ENCODE measurements at regions of chr1 and their contacts with region 1.

Region 1: GRCh38 chr1:184664042-184664655 is 90.5 kb downstream of the EDEM3 start:
- DNase-seq: peak; percentile 43
- H3K4me3 ChIP-seq: peak overlapping the region; percentile 40 to 51 (median 48)
- H3K27ac ChIP-seq: no peak overlapping the region
- H3K4me1 ChIP-seq: peaks cover 10% of the 10 kb centered on the region
- H3K27me3 ChIP-seq: no peaks in the 10 kb centered on the region
- CTCF ChIP-seq: peak; percentile 77 to 97

Region 2: GRCh38 chr1:184082541-184083415 is 581.4 kb before region 1 on chr1:
- CTCF ChIA-PET with region 1: no interaction called
- dilution Hi-C with region 1: no loop called
- in situ Hi-C with region 1: loop called (anchors 10 to 25 kb)
- intact Hi-C with region 1: no loop called
- DNase-seq: no peak
- H3K4me3 ChIP-seq: no peak overlapping the region
- H3K27ac ChIP-seq: no peak overlapping the region
- H3K4me1 ChIP-seq: no peaks in the 10 kb centered on the region
- H3K27me3 ChIP-seq: no peaks in the 10 kb centered on the region
- CTCF ChIP-seq: no peak

Region 3: GRCh38 chr1:184242507-184242943 is 421.6 kb before region 1 on chr1:
- CTCF ChIA-PET with region 1: interaction called, 3 read pairs
- dilution Hi-C with region 1: no loop called
- in situ Hi-C with region 1: loop called in 1 of 2 experiments (anchors 25 kb)
- intact Hi-C with region 1: loop called (anchors 1 kb)
- DNase-seq: no peak
- H3K4me3 ChIP-seq: no peak overlapping the region
- H3K27ac ChIP-seq: no peak overlapping the region
- H3K4me1 ChIP-seq: no peaks in the 10 kb centered on the region
- H3K27me3 ChIP-seq: no peaks in the 10 kb centered on the region
- CTCF ChIP-seq: peak; percentile 9 to 31

Region 4: GRCh38 chr1:184494929-184495328 is 169.2 kb before region 1 on chr1:
- CTCF ChIA-PET with region 1: no interaction called
- dilution Hi-C with region 1: no loop called
- in situ Hi-C with region 1: no loop called
- intact Hi-C with region 1: loop called (anchors 10 kb)
- DNase-seq: no peak
- H3K4me3 ChIP-seq: no peak overlapping the region
- H3K27ac ChIP-seq: no peak overlapping the region
- H3K4me1 ChIP-seq: peaks cover 8% of the 10 kb centered on the region
- H3K27me3 ChIP-seq: no peaks in the 10 kb centered on the region
- CTCF ChIP-seq: no peak

Region 5: DNA sequence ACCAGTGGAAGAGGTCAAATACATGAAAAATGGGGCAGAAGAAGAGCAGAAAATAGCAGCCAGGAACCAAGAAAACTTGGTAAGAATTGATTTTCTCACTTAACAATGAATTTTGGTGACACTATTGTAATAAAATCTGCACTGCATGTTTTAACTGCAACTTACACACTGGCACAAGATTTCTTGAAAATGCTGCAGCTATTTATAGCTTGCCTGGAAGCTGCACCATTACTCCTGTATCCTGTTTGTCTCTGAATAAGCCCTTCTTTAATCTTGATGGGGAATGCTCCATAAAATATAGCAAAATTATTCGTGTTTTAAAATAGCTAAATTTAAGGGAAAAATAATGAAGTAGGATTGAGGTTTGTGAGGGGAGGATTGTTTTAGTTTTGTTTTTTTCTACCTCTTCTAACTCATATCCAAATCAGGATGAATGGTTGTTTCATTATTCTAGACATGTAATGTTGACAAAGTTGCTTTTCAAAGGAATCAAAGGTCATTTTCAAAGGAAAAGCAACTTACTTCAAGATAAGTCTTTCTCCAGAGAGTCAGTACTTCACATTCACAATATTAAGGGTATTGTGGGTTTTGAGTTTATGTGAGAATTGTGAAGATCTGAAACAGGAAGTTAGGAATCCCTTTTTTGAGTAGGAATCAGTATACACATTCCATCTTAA is 156.4 kb before region 1 on chr1:
- CTCF ChIA-PET with region 1: no interaction called
- dilution Hi-C with region 1: no loop called
- in situ Hi-C with region 1: no loop called
- intact Hi-C with region 1: no loop called
- DNase-seq: no peak
- H3K4me3 ChIP-seq: no peak overlapping the region
- H3K27ac ChIP-seq: no peak overlapping the region
- H3K4me1 ChIP-seq: no peaks in the 10 kb centered on the region
- H3K27me3 ChIP-seq: no peaks in the 10 kb centered on the region
- CTCF ChIP-seq: no peak

Region 6: GRCh38 chr1:184597659-184598357 is 66.3 kb before region 1 on chr1:
- CTCF ChIA-PET with region 1: no interaction called
- dilution Hi-C with region 1: no loop called
- in situ Hi-C with region 1: no loop called
- intact Hi-C with region 1: no loop called
- DNase-seq: no peak
- H3K4me3 ChIP-seq: no peak overlapping the region
- H3K27ac ChIP-seq: no peak overlapping the region
- H3K4me1 ChIP-seq: peaks cover 14% of the 10 kb centered on the region
- H3K27me3 ChIP-seq: no peaks in the 10 kb centered on the region
- CTCF ChIP-seq: peak in 1 of 2 donors; percentile 1

Region 7: GRCh38 chr1:184635347-184635979 is 28.7 kb before region 1 on chr1:
- CTCF ChIA-PET with region 1: no interaction called
- dilution Hi-C with region 1: no loop called
- in situ Hi-C with region 1: no loop called
- intact Hi-C with region 1: no loop called
- DNase-seq: peak; percentile 37
- H3K4me3 ChIP-seq: no peak overlapping the region
- H3K27ac ChIP-seq: no peak overlapping the region
- H3K4me1 ChIP-seq: peaks cover 27% of the 10 kb centered on the region
- H3K27me3 ChIP-seq: no peaks in the 10 kb centered on the region
- CTCF ChIP-seq: no peak

Region 8: GRCh38 chr1:184649451-184649888 is 14.7 kb before region 1 on chr1:
- CTCF ChIA-PET with region 1: no interaction called
- dilution Hi-C with region 1: no loop called
- in situ Hi-C with region 1: no loop called
- intact Hi-C with region 1: no loop called
- DNase-seq: no peak
- H3K4me3 ChIP-seq: no peak overlapping the region
- H3K27ac ChIP-seq: no peak overlapping the region
- H3K4me1 ChIP-seq: no peaks in the 10 kb centered on the region
- H3K27me3 ChIP-seq: no peaks in the 10 kb centered on the region
- CTCF ChIP-seq: no peak

Measured in mammary epithelial cell (primary cell).